Naive thymus-derived CD8-positive, alpha-beta T cell (primary cell): ENCODE measurements at regions of chr2 and their contacts with region 1.

Region 1: GRCh38 chr2:197268786-197269584 is 41.6 kb downstream of the ANKRD44 start:
- DNase-seq: peak in 2 of 10 donors; percentile 33 to 36
- ATAC-seq: peak; percentile 49 to 51
- H3K4me3 Mint-ChIP-seq: peak overlapping the region; percentile 4 to 77 (median 56)
- H3K27ac Mint-ChIP-seq: peak overlapping the region; percentile 76 to 99 (median 92)
- H3K4me1 Mint-ChIP-seq: peaks cover 41 to 98% (median 97%) of the 10 kb centered on the region in 4 donors
- H3K27me3 Mint-ChIP-seq: no peaks in the 10 kb centered on the region

Region 2: DNA sequence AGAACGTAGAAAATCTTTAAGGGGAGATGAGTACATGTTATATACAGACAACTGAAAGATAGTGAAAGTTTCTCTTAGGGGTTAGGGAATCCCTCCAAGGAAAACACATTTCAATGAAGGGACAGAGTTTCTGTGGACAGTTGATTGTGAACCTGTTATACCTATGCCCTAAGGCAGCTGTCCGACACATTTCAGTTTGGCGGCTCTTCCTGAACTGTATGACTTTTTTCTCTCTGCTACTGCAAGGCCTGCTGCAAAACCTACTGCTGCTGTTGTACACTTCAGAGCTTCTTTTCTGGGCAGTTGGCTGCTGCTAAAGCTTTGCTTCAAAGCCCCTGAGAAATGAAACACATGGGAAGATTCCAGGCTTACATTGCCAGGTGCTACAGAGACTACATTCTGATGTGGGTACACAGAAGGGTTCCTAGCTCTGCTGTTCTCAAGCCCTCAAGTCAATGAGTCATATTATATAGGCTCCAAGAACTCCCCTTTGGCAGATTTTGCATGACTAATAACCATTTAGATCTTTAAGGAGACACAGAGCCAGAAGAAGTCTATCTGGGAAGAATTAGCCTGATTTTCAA is 329.7 kb before region 1 on chr2:
- POLR2A ChIA-PET with region 1: no interaction called
- DNase-seq: no peak
- ATAC-seq: no peak
- H3K4me3 Mint-ChIP-seq: no peak overlapping the region
- H3K27ac Mint-ChIP-seq: no peak overlapping the region
- H3K4me1 Mint-ChIP-seq: peaks cover 0 to 4% (median under 1%) of the 10 kb centered on the region in 4 donors
- H3K27me3 Mint-ChIP-seq: peaks cover 1 to 10% (median 8%) of the 10 kb centered on the region in 5 donors

Region 3: GRCh38 chr2:197152451-197153228 is 116.3 kb before region 1 on chr2:
- POLR2A ChIA-PET with region 1: no interaction called
- DNase-seq: peak in 8 of 10 donors; percentile 17 to 67 (median 40)
- ATAC-seq: peak; percentile 87 to 94
- H3K4me3 Mint-ChIP-seq: peak overlapping the region; percentile 46 to 84 (median 74)
- H3K27ac Mint-ChIP-seq: peak overlapping the region; percentile 90 to 100 (median 92)
- H3K4me1 Mint-ChIP-seq: peaks cover 34 to 92% (median 81%) of the 10 kb centered on the region in 4 donors
- H3K27me3 Mint-ChIP-seq: no peaks in the 10 kb centered on the region

Region 4: DNA sequence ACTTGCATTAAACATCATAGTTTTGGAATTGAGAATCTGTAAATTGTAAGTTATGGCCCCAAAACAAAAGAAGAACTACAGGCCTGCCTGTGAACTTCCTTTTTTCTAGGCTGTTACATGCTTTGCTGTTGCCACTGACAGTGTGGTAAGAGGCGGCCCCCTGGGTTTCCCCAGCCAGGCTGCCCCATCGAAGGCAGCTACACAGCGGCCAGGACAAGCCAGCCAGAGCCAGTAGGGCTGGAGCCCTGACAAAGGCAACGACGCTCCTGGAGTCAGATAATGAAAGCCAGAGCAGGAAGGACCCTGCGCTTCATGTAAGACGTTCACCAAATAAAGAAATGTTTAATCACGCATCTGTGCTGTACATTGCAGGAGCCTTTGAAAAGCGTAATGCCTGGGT is 13.4 kb before region 1 on chr2:
- POLR2A ChIA-PET with region 1: interaction called, 30 read pairs
- DNase-seq: peak; percentile 51 to 83 (median 68)
- ATAC-seq: peak; percentile 84 to 94
- H3K4me3 Mint-ChIP-seq: peak overlapping the region; percentile 70 to 86 (median 79)
- H3K27ac Mint-ChIP-seq: peak overlapping the region; percentile 90 to 100 (median 96)
- H3K4me1 Mint-ChIP-seq: peaks cover 37 to 85% (median 78%) of the 10 kb centered on the region in 4 donors
- H3K27me3 Mint-ChIP-seq: no peaks in the 10 kb centered on the region

Region 5: GRCh38 chr2:197279997-197280746 is 11.2 kb after region 1 on chr2:
- POLR2A ChIA-PET with region 1: interaction called, 10 read pairs
- DNase-seq: no peak
- ATAC-seq: peak; percentile 64 to 84
- H3K4me3 Mint-ChIP-seq: peak overlapping the region; percentile 57 to 85 (median 80)
- H3K27ac Mint-ChIP-seq: peak overlapping the region; percentile 90 to 96 (median 94)
- H3K4me1 Mint-ChIP-seq: peaks cover 51 to 91% (median 86%) of the 10 kb centered on the region in 4 donors
- H3K27me3 Mint-ChIP-seq: no peaks in the 10 kb centered on the region

Region 6: DNA sequence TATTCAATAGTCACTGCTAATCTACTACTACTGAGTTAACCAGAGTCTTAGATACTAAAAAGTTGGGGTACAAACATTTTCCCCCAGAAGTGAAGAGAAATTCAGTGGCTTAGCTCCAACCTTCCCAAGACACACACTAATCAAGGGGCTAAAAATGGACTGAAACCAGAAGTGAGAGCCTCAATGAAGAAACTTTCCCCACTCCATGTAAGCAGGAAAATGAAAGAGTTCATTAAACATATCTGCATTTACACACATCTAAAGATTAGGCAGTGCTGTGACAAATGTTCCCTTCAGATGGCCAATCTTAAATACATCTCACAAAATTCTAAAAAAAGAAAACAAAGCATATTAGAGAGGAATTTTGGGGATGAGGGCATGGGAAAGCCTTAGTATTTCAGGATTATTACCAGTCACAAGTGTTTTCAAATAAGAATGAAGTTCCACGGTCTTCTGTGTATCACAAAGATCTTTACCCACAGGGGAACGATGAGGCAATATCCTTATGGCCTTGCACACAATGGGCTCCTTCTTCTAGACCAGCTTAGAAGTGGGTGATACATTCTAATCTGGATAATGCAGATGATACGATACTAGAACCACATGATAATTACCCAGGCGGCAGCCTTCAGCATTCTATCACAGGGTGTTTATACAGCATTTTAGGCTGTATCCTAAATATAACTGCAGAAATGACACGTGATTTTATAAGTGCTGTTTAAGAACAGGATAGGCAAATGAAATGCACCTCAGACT is 24.4 kb after region 1 on chr2:
- POLR2A ChIA-PET with region 1: interaction called, 11 read pairs
- DNase-seq: no peak
- ATAC-seq: peak; percentile 59 to 62
- H3K4me3 Mint-ChIP-seq: peak overlapping the region; percentile 67 to 94 (median 78)
- H3K27ac Mint-ChIP-seq: peak overlapping the region; percentile 93 to 98 (median 95)
- H3K4me1 Mint-ChIP-seq: peaks cover 54 to 97% (median 86%) of the 10 kb centered on the region in 4 donors
- H3K27me3 Mint-ChIP-seq: no peaks in the 10 kb centered on the region

Region 7: DNA sequence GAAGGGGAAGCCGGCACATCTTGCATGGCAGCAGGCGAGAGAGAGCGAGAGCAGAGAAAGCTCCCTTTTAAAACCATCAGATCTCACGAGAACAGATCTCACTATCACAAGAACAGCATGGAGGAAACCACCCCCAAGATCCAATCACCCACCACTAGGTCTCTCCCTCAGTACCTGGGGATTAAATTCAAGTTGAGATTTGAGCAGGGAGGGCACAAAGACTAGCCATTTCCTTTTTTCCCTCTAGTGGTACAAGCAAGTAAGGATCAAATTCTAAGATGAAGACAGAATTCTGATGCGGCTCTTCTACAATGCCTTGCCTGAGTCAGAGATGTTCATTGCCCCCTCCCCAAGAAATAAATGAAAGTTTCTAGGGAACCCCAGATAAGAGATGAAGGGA is 87.2 kb after region 1 on chr2:
- POLR2A ChIA-PET with region 1: no interaction called
- DNase-seq: peak in 2 of 10 donors; percentile 28 to 38
- ATAC-seq: peak; percentile 56 to 72
- H3K4me3 Mint-ChIP-seq: peak overlapping the region in 1 of 10 donors; percentile 34
- H3K27ac Mint-ChIP-seq: peak overlapping the region in 7 of 10 donors; percentile 10 to 77 (median 48)
- H3K4me1 Mint-ChIP-seq: peaks cover 14 to 28% (median 19%) of the 10 kb centered on the region in 4 donors
- H3K27me3 Mint-ChIP-seq: no peaks in the 10 kb centered on the region

Region 8: GRCh38 chr2:197599285-197599965 is 330.4 kb after region 1 on chr2:
- POLR2A ChIA-PET with region 1: no interaction called
- DNase-seq: peak in 9 of 10 donors; percentile 10 to 78 (median 52)
- ATAC-seq: peak; percentile 99 to 100
- H3K4me3 Mint-ChIP-seq: peak overlapping the region; percentile 44 to 82 (median 70)
- H3K27ac Mint-ChIP-seq: peak overlapping the region in 4 of 10 donors; percentile 15 to 70 (median 51)
- H3K4me1 Mint-ChIP-seq: peaks cover 5 to 9% (median 8%) of the 10 kb centered on the region in 4 donors
- H3K27me3 Mint-ChIP-seq: peaks cover 0 to 19% (median 5%) of the 10 kb centered on the region in 5 donors